RWPE1 (cell line): ENCODE measurements at regions of chr1 and their contacts with region 1.

Region 1: DNA sequence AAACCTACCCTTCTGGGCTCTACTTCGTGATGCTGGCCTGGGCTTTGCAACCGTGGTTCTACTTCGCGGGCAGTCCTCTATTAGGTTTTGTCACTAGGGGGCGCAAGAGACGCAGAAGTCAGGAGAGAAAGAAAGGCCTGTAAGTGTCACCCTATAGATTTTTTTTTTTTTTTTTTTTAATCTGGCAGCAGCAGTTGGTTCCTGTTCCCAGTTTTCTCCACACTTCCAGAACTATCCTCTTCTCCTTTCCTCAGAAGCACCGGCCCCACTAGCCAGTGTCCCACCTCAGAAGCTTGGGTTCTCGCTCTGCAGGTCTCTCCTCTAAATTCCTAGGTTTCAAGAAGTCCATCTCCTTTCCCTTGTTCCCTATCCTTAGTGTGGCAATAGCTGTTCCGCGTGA is 9.1 kb upstream of the LCE2D start:
- DNase-seq: peak; percentile 55
- H3K27ac ChIP-seq: no peak overlapping the region
- CTCF ChIP-seq: peak; percentile 82

Region 2: GRCh38 chr1:152356736-152357135 is 297.4 kb before region 1 on chr1:
- CTCF ChIA-PET with region 1: no interaction called
- POLR2A ChIA-PET with region 1: no interaction called
- DNase-seq: no peak
- H3K27ac ChIP-seq: no peak overlapping the region
- CTCF ChIP-seq: no peak

Region 3: GRCh38 chr1:152585586-152585985 is 68.5 kb before region 1 on chr1:
- CTCF ChIA-PET with region 1: no interaction called
- POLR2A ChIA-PET with region 1: no interaction called
- DNase-seq: no peak
- H3K27ac ChIP-seq: no peak overlapping the region
- CTCF ChIP-seq: no peak

Region 4: GRCh38 chr1:152667648-152668047 is 13.5 kb after region 1 on chr1:
- CTCF ChIA-PET with region 1: interaction called, 11 read pairs
- POLR2A ChIA-PET with region 1: no interaction called
- DNase-seq: no peak
- H3K27ac ChIP-seq: no peak overlapping the region
- CTCF ChIP-seq: no peak

Region 5: GRCh38 chr1:152869808-152870419 is 215.8 kb after region 1 on chr1:
- CTCF ChIA-PET with region 1: interaction called, 16 read pairs
- POLR2A ChIA-PET with region 1: no interaction called
- DNase-seq: peak; percentile 78
- H3K27ac ChIP-seq: no peak overlapping the region
- CTCF ChIP-seq: peak; percentile 86

Region 6: DNA sequence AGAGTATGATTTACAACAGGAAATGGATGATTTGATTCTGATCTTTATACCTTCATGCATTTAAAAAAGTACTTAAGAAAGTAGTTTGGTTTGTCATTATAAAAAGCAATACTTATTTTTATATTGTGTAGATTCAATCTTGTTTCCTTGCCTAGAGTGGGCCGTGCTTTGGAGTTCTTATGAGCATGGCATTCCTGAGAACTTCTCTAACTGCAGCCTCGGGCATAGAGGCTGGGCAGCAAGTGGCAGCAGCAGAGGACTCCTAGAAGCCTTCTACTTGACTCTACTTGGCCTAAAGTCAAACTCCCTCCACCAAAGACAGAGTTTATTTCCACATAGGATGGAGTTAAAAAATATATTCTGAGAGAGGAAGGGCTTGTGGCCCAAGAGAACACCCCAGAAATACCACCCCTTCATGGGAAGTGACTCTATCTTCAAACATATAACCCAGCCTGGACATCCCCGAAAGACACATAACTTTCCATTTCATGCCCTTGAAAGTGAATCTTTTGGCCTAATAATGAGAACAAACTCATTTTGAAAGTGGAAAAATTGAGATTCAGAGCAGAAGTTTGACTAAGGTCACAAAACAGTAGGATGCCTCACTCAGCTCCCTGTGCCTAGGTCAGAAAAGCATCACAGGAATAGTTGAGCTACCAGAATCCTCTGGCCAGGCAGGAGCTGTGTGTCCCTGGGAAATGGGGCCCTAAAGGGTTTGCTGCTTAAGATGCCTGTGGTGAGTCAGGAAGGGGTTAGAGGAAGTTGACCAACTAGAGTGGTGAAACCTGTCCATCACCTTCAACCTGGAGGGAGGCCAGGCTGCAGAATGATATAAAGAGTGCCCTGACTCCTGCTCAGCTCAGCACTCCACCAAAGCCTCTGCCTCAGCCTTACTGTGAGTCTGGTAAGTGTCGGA is 253.8 kb after region 1 on chr1 and contains the start of gene IVL:
- CTCF ChIA-PET with region 1: interaction called, 10 read pairs
- POLR2A ChIA-PET with region 1: no interaction called
- DNase-seq: peak; percentile 76
- H3K27ac ChIP-seq: peak within 1 kb of the TSS; percentile 53
- CTCF ChIP-seq: no peak

Region 7: GRCh38 chr1:152926091-152926490 is 272.0 kb after region 1 on chr1:
- CTCF ChIA-PET with region 1: interaction called, 17 read pairs
- POLR2A ChIA-PET with region 1: no interaction called
- DNase-seq: peak; percentile 63
- H3K27ac ChIP-seq: no peak overlapping the region
- CTCF ChIP-seq: peak; percentile 33; the same call in 1 of the 2 replicates